ENCODE measurements at regions of chr19 and their contacts with region 1.

Region 1: GRCh38 chr19:49097455-49098288 is 12.4 kb downstream of the SNRNP70 start:
- DNase-seq: peak; percentile 66 to 90
- H3K4me3 ChIP-seq: no peak overlapping the region
- H3K27ac ChIP-seq: peak overlapping the region; percentile 21; the same call in 1 of the 2 replicates
- H3K4me1 ChIP-seq: no peaks in the 10 kb centered on the region
- H3K27me3 ChIP-seq: no peaks in the 10 kb centered on the region
- CTCF ChIP-seq: peak; percentile 95 to 99 (median 98)
- EP300 ChIP-seq: no peak
- POLR2A ChIP-seq: peak in 1 of 2 experiments; percentile 54; a peak in 2 of 3 replicates
- RAD21 ChIP-seq: peak; percentile 88 to 95

Region 2: GRCh38 chr19:49017666-49018351 is 79.9 kb before region 1 on chr19:
- CTCF ChIA-PET with region 1: interaction called, 11 read pairs
- POLR2A ChIA-PET with region 1: no interaction called
- DNase-seq: peak in 1 of 2 experiments; percentile 78
- H3K4me3 ChIP-seq: peak overlapping the region; percentile 27 to 68 (median 40)
- H3K27ac ChIP-seq: no peak overlapping the region
- H3K4me1 ChIP-seq: peaks cover 0 to 17% (median 8%) of the 10 kb centered on the region in 4 experiments; a peak in 5 of 7 replicates
- H3K27me3 ChIP-seq: peaks cover 0 to 15% (median 12%) of the 10 kb centered on the region in 4 experiments; a peak in 6 of 7 replicates
- CTCF ChIP-seq: peak; percentile 8 to 35 (median 32)
- EP300 ChIP-seq: no peak
- POLR2A ChIP-seq: no peak
- RAD21 ChIP-seq: no peak; a peak in 1 of 4 replicates

Region 3: DNA sequence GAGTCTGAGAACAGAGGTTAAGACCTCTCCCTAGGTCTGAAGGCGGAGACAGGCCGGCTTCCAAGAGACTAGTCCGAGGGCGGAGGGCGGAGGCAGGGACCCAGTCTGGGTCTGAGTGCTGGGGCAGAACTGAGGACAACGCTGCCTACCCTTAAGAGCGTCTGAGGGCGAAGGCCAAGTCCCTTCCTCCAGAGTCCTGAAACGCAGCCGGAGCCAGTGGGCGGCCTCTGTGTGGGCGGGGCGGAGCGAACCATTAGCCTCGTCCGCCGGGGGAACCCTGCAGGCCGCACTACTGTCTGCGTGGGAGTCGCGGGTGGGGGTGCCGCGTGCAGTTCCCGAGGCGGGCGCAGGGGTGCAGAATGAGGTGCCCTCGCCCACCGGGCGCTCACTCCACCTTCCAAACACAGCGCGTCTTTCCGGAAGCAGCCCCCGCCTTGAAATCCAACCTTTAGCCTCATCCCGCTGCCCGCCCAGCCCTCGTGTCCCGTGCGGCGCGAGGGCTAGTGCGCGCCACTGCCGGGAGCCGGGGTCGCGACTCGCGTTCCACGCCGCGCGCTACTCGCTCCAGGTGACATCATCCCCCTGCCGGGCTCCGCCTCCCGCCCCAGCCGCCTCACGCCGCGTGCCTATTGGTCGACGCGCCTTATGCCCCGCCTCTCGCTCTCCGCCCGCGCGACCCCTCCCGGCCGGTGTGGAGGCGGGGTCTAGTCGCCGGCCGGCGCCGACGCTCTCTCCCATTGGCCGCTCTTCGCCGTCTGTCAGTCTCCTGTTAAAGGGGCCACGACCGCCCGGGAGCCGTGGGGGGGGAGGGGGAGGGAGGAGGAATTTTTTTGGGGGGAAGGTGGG is 21.1 kb after region 1 on chr19 and contains the start of gene C19orf73:
- CTCF ChIA-PET with region 1: interaction called, 17 read pairs
- POLR2A ChIA-PET with region 1: interaction called, 67 read pairs
- DNase-seq: peak in 1 of 2 experiments; percentile 94
- H3K4me3 ChIP-seq: peak within 1 kb of the TSS; percentile 64 to 86 (median 78)
- H3K27ac ChIP-seq: peak within 1 kb of the TSS; percentile 57; the same call in 1 of the 2 replicates
- H3K4me1 ChIP-seq: peaks cover 0 to 5% (median 4%) of the 10 kb centered on the region in 4 experiments; a peak in 4 of 7 replicates
- H3K27me3 ChIP-seq: peaks cover 8 to 19% (median 17%) of the 10 kb centered on the region in 4 experiments
- CTCF ChIP-seq: peak in 1 of 3 experiments; percentile 5; a peak in 1 of 4 replicates
- EP300 ChIP-seq: peak in 1 of 2 experiments; percentile 76; a peak in 1 of 3 replicates
- POLR2A ChIP-seq: peak in 1 of 2 experiments; percentile 24; a peak in 1 of 3 replicates
- RAD21 ChIP-seq: no peak; a peak in 1 of 4 replicates
- total RNA-seq, gene C19orf73: 1.2 and 2.5 TPM in 2 replicates

Region 4: GRCh38 chr19:49148784-49149651 is 51.3 kb after region 1 on chr19:
- CTCF ChIA-PET with region 1: interaction called, 38 read pairs
- POLR2A ChIA-PET with region 1: interaction called, 5 read pairs
- DNase-seq: peak in 1 of 2 experiments; percentile 100
- H3K4me3 ChIP-seq: peak overlapping the region; percentile 69 to 97 (median 90)
- H3K27ac ChIP-seq: peak overlapping the region; percentile 65; the same call in 1 of the 2 replicates
- H3K4me1 ChIP-seq: peaks cover 0 to 22% (median 9%) of the 10 kb centered on the region in 4 experiments; a peak in 6 of 7 replicates
- H3K27me3 ChIP-seq: peaks cover 0 to 5% (median 2%) of the 10 kb centered on the region in 4 experiments; a peak in 2 of 7 replicates
- CTCF ChIP-seq: no peak
- EP300 ChIP-seq: peak in 1 of 2 experiments; percentile 95; a peak in 1 of 3 replicates
- POLR2A ChIP-seq: no peak; a peak in 2 of 3 replicates
- RAD21 ChIP-seq: no peak

Region 5: DNA sequence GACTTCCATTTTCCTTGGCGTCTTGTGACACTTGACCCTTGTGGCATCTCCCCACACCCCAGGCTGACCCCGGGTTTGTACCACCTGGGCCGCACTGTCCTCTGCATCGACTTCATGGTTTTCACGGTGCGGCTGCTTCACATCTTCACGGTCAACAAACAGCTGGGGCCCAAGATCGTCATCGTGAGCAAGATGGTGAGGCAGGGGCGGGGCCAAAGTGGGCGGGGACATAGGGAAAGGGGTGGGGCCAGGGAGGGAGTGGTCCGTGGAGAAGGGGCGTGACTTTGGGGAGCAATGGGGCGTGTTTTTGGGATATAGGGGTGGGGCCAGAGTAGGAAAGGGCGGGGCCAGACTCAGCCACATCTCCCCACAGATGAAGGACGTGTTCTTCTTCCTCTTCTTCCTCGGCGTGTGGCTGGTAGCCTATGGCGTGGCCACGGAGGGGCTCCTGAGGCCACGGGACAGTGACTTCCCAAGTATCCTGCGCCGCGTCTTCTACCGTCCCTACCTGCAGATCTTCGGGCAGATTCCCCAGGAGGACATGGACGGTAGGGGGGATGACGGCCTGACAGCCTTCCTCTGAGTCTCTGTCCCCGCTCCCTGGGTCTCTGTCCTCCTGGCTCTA is 102.7 kb after region 1 on chr19:
- CTCF ChIA-PET with region 1: interaction called, 27 read pairs
- POLR2A ChIA-PET with region 1: interaction called, 3 read pairs
- DNase-seq: no peak
- H3K4me3 ChIP-seq: no peak overlapping the region
- H3K27ac ChIP-seq: no peak overlapping the region
- H3K4me1 ChIP-seq: no peaks in the 10 kb centered on the region
- H3K27me3 ChIP-seq: no peaks in the 10 kb centered on the region
- CTCF ChIP-seq: no peak
- EP300 ChIP-seq: no peak
- POLR2A ChIP-seq: no peak
- RAD21 ChIP-seq: no peak

Region 6: GRCh38 chr19:49224856-49225255 is 127.2 kb after region 1 on chr19:
- CTCF ChIA-PET with region 1: interaction called, 19 read pairs
- POLR2A ChIA-PET with region 1: interaction called, 6 read pairs
- DNase-seq: peak; percentile 56 to 78
- H3K4me3 ChIP-seq: no peak overlapping the region
- H3K27ac ChIP-seq: no peak overlapping the region
- H3K4me1 ChIP-seq: no peaks in the 10 kb centered on the region; a peak in 1 of 7 replicates
- H3K27me3 ChIP-seq: no peaks in the 10 kb centered on the region
- CTCF ChIP-seq: peak; percentile 71 to 76 (median 73)
- EP300 ChIP-seq: no peak
- POLR2A ChIP-seq: no peak
- RAD21 ChIP-seq: peak; percentile 82 to 88